T-cell (primary cell): ENCODE measurements at regions of chr12 and their contacts with region 1.

Region 1: DNA sequence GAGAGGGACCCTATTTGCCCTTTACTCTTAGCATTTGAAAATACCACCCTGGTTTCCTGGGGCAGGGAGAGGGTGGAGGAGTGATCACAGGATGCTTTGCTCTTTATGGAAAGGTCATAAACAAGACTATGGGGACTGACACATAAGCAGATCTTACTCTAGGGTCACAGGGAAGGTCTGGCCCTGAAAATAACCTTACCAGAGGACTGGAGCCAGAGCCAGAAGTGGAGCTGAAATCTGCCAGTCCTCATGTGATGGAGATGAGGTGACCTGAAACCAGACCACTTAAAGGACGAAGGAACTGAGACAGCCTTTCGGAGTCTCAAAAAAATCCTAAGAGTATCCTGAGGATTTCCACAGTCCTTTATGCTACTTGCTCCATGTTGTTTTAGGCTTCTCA is 12.4 kb downstream of the PFKM start:
- DNase-seq: no peak
- ATAC-seq: no peak
- H3K4me3 ChIP-seq: no peak overlapping the region
- H3K4me3 Mint-ChIP-seq: no peak overlapping the region
- H3K27ac ChIP-seq: no peak overlapping the region
- H3K27ac Mint-ChIP-seq: no peak overlapping the region
- H3K4me1 ChIP-seq: no peaks in the 10 kb centered on the region
- H3K4me1 Mint-ChIP-seq: no peaks in the 10 kb centered on the region
- H3K27me3 ChIP-seq: no peaks in the 10 kb centered on the region
- H3K27me3 Mint-ChIP-seq: no peaks in the 10 kb centered on the region

Region 2: DNA sequence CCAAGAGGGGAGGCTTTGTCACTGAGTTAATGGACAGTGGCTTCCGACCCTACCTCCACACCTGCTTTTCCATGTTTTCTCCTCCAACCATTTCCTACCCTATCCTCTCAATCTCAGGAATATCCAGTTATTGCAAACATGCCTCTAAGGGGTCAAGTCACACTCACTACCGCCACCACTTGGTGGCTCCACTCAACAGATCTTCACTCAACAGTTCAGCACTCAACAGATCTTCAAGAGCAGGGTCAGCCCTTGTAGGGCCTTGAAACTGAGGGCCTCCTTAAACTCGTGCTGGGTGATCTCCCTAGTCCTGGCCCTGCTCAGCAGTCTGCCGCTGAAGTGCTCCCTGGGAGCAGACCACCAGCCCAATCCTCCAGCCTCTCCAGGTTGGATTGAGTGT is 205.0 kb after region 1 on chr12:
- CTCF ChIA-PET with region 1: no interaction called
- POLR2A ChIA-PET with region 1: no interaction called
- DNase-seq: no peak
- ATAC-seq: no peak
- H3K4me3 ChIP-seq: no peak overlapping the region
- H3K4me3 Mint-ChIP-seq: no peak overlapping the region
- H3K27ac ChIP-seq: no peak overlapping the region
- H3K27ac Mint-ChIP-seq: no peak overlapping the region
- H3K4me1 ChIP-seq: peaks cover 0 to 5% of the 10 kb centered on the region in 2 experiments
- H3K4me1 Mint-ChIP-seq: peaks cover 14 to 19% (median 19%) of the 10 kb centered on the region in 3 donors
- H3K27me3 ChIP-seq: no peaks in the 10 kb centered on the region
- H3K27me3 Mint-ChIP-seq: no peaks in the 10 kb centered on the region

Region 3: DNA sequence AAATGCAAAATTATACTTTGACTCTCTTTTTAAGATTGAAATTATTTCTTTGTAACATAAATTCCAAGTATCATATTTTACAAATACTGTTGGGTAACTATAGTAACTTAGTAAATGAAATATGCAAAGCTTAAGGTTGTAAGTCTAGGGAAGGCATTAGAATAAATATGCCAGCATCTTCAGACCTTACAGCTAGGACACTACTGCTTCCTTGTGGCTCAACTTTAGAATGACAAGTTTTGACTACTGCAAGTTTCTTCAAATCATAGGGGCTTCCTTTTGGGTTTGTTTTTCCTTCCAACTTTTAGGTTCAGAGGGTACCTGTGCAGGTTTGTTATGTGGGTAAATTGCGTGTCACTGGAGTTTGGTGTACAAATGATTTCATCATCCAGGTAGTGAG is 323.1 kb after region 1 on chr12:
- CTCF ChIA-PET with region 1: no interaction called
- POLR2A ChIA-PET with region 1: interaction called in 1 of 2 experiments, 11 read pairs
- DNase-seq: peak in 1 of 35 experiments; percentile 59
- ATAC-seq: peak; percentile 40 to 69 (median 46)
- H3K4me3 ChIP-seq: no peak overlapping the region
- H3K4me3 Mint-ChIP-seq: no peak overlapping the region
- H3K27ac ChIP-seq: no peak overlapping the region
- H3K27ac Mint-ChIP-seq: no peak overlapping the region
- H3K4me1 ChIP-seq: no peaks in the 10 kb centered on the region
- H3K4me1 Mint-ChIP-seq: no peaks in the 10 kb centered on the region
- H3K27me3 ChIP-seq: peaks cover 0 to 7% of the 10 kb centered on the region in 2 experiments
- H3K27me3 Mint-ChIP-seq: peaks cover 16 to 18% of the 10 kb centered on the region in 2 donors

Region 4: DNA sequence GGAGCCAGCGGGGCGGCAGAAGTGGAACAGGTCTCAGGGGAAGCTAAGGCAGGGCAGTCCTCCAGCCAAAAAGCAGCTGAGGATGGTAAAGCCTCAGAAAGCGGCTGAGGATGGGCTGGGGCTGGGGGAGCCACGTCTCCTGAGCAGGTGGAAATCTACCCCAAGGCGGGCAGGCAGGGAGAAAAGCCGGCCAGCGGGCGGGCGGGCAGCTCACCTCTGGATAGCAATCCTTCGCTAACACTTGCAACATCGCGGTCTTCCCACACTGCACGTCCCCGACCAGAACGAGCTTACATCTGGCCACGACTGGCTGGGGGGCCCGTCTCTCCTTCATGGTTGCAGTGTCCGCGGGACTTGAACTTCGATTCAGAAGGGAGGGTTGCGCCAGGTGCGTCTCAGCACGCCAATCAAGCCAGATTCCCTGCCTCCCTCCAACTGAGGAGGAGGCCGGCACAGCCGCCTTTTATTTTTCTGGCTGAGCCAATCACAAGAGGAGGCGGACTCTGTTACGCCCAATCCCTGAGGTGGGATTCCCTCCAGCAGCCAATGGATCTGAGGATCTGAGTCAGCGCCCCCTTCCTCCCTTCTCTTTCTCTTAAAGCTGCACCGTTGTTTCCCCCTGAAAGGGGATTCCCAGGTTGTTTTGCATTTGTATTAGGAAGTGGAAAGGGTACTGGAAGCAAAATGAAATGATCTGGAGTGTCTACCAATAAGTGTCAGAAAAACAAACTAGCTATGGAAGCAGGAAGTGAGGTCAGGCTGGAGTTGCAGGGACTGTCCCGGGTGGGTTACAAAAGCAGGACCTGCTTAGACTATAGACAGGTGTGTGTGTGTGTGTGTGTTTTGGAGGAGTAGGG is 734.1 kb after region 1 on chr12 and contains the start of gene RND1:
- CTCF ChIA-PET with region 1: no interaction called
- POLR2A ChIA-PET with region 1: no interaction called
- DNase-seq: peak; percentile 59 to 94 (median 82)
- ATAC-seq: peak; percentile 92 to 97 (median 96)
- H3K4me3 ChIP-seq: peak within 1 kb of the TSS; percentile 58 to 77
- H3K4me3 Mint-ChIP-seq: peak within 1 kb of the TSS; percentile 87 to 89 (median 88)
- H3K27ac ChIP-seq: peak within 1 kb of the TSS; percentile 20
- H3K27ac Mint-ChIP-seq: peak within 1 kb of the TSS; percentile 84 to 94
- H3K4me1 ChIP-seq: peaks cover 2 to 23% of the 10 kb centered on the region in 2 experiments
- H3K4me1 Mint-ChIP-seq: peaks cover 25 to 26% (median 25%) of the 10 kb centered on the region in 3 donors
- H3K27me3 ChIP-seq: peaks cover 0 to 33% of the 10 kb centered on the region in 2 experiments
- H3K27me3 Mint-ChIP-seq: peaks cover 13 to 30% of the 10 kb centered on the region in 2 donors
- total RNA-seq, gene RND1: 2.6 to 10.5 (median 5.0) TPM